Heart right ventricle (tissue), 16 donors: ENCODE measurements at regions of chr6 and their contacts with region 1.

Region 1: DNA sequence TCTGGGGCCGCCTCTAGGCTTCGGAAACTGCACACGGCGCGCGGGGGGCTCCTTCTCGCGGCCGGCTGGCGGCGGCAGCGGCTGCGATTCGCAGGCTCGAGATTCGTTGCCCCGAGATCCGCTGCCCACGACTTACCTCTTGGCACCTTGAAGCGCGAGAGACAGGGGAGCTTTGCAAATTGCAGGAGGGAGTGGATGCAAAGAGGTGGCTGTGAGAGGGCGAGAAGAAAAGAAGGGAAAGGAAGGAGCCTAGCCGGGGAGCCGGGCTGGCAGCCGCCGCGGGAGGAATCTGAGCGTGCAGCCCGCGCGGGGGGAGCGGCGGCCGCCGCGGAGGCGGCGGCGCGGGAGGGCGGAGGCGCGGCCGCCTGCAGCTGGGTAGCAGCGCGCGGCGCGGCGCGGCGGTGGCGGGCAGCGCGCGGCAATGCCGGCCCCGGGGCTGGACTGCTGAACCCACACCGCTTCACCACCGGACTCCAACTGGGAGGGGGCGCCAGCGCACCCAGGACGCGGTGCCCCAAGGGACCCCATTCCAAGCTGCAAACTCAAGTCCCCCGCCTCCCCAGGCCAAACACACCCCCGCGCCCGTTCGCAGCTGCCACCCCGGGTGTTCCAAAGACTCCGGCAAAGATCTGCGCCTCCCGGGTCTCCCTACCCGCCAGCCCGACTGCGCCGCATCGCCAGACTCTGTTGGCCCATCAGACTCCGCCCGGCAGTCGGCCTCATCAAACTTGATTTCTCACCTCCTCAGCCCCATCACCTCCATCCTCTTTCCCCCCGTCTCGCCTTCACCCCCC is 44.2 kb upstream of the SUPT3H start:
- DNase-seq: peak; percentile 46 to 57
- ATAC-seq: peak; percentile 40 to 80 (median 52)
- H3K4me3 ChIP-seq: peak overlapping the region; percentile 52 to 75 (median 63)
- H3K27ac ChIP-seq: peak overlapping the region in 6 of 10 donors; percentile 39 to 86 (median 60)
- H3K4me1 ChIP-seq: peaks cover 7 to 55% (median 34%) of the 10 kb centered on the region in 9 donors
- H3K27me3 ChIP-seq: peaks cover 0 to 81% (median 54%) of the 10 kb centered on the region in 7 donors
- CTCF ChIP-seq: peak in 3 of 9 donors; percentile 44 to 49 (median 47)

Region 2: DNA sequence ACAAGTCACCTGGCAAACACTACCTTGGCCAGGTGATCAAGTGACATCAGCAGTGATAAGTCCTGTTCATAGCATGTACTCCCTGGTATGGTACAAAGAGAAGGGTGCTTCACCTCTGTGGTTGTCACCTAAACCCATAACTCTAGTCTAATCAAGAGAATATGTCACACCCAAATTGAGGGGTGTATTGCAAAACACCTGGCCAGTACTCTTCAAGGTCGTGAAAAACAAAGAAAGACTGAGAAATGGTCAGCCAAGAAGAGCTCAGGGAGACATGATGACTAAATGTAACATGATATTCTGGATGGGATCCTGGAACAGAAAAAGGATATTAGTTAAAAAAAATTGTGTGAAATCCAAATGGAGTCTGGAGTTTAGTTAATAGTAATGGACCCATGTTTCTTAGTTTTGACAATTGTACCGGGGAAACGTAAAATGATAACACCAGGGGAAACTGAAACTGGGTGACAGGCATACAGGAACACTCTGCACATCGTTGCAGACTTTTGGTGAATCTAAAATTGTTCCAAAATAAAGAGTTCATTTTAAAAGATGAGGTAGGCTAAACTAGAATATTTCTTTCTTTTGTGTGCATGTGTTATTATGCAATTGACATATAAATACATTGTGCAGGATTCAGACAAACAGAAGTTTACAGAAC is 772.4 kb before region 1 on chr6:
- intact Hi-C with region 1: loop called in 4 of 10 experiments (anchors 5 to 10 kb)
- DNase-seq: no peak
- ATAC-seq: peak in 1 of 8 donors; percentile 29
- H3K4me3 ChIP-seq: no peak overlapping the region
- H3K27ac ChIP-seq: peak overlapping the region in 1 of 10 donors; percentile 40
- H3K4me1 ChIP-seq: no peaks in the 10 kb centered on the region
- H3K27me3 ChIP-seq: peaks cover 0 to 9% (median 0%) of the 10 kb centered on the region in 7 donors
- CTCF ChIP-seq: no peak

Region 3: GRCh38 chr6:44655412-44656342 is 766.2 kb before region 1 on chr6:
- intact Hi-C with region 1: loop called in 8 of 10 experiments (anchors 2 to 10 kb)
- DNase-seq: peak; percentile 60 to 74
- ATAC-seq: peak; percentile 54 to 87 (median 74)
- H3K4me3 ChIP-seq: no peak overlapping the region
- H3K27ac ChIP-seq: peak overlapping the region in 1 of 10 donors; percentile 43
- H3K4me1 ChIP-seq: peaks cover 0 to 8% (median 3%) of the 10 kb centered on the region in 9 donors
- H3K27me3 ChIP-seq: peaks cover 0 to 9% (median 0%) of the 10 kb centered on the region in 7 donors
- CTCF ChIP-seq: peak; percentile 76 to 98 (median 96)

Region 4: GRCh38 chr6:45138765-45139164 is 283.1 kb before region 1 on chr6:
- intact Hi-C with region 1: no loop called
- DNase-seq: no peak
- ATAC-seq: no peak
- H3K4me3 ChIP-seq: no peak overlapping the region
- H3K27ac ChIP-seq: no peak overlapping the region
- H3K4me1 ChIP-seq: no peaks in the 10 kb centered on the region
- H3K27me3 ChIP-seq: no peaks in the 10 kb centered on the region
- CTCF ChIP-seq: no peak

Region 5: GRCh38 chr6:45297320-45297719 is 124.6 kb before region 1 on chr6:
- intact Hi-C with region 1: no loop called
- DNase-seq: no peak
- ATAC-seq: no peak
- H3K4me3 ChIP-seq: no peak overlapping the region
- H3K27ac ChIP-seq: no peak overlapping the region
- H3K4me1 ChIP-seq: no peaks in the 10 kb centered on the region
- H3K27me3 ChIP-seq: no peaks in the 10 kb centered on the region
- CTCF ChIP-seq: no peak

Region 6: DNA sequence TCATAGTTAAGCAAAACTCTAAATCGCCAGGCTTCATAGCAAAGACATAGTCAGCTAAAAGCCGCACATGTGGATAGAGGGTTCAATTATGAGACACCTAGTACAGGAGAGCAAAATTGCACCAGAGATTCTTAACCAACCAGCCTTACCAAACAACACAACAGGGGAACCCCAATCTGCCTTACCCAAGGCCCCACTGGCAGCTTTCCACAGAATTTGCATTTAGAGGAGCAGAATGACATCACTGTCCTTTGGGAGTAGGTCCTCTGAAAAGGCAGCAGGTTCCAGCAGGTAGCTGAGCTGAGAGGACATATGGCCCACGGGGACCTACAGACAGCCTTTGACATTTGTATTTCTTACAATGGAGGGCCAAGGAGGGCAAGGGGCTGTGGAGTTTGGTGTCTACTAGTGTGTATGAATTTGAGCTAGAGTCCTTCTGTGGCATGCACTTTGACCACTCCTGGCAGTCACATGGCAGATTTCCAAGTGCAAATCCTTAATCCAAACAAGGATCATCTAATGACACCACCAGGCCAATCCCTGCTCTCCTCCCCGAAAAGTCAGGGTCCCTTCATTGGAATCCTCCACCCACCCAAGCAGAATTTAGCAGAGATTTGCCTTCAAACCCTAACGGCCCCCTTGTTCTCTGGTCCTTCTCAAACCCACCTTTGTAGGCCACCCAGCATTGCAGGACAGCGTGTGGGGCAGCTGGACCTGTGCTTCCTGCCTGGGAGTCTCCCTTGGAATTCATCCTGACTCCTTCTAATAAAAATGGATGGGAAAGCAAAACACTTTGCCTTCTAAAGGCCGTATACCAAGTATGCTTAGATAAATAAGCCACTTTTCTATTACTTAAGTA is 127.0 kb after region 1 on chr6:
- intact Hi-C with region 1: loop called in 1 of 10 experiments (anchors 10 kb)
- DNase-seq: no peak
- ATAC-seq: no peak
- H3K4me3 ChIP-seq: no peak overlapping the region
- H3K27ac ChIP-seq: no peak overlapping the region
- H3K4me1 ChIP-seq: peaks cover 0 to under 1% (median 0%) of the 10 kb centered on the region in 9 donors
- H3K27me3 ChIP-seq: no peaks in the 10 kb centered on the region
- CTCF ChIP-seq: no peak

Region 7: DNA sequence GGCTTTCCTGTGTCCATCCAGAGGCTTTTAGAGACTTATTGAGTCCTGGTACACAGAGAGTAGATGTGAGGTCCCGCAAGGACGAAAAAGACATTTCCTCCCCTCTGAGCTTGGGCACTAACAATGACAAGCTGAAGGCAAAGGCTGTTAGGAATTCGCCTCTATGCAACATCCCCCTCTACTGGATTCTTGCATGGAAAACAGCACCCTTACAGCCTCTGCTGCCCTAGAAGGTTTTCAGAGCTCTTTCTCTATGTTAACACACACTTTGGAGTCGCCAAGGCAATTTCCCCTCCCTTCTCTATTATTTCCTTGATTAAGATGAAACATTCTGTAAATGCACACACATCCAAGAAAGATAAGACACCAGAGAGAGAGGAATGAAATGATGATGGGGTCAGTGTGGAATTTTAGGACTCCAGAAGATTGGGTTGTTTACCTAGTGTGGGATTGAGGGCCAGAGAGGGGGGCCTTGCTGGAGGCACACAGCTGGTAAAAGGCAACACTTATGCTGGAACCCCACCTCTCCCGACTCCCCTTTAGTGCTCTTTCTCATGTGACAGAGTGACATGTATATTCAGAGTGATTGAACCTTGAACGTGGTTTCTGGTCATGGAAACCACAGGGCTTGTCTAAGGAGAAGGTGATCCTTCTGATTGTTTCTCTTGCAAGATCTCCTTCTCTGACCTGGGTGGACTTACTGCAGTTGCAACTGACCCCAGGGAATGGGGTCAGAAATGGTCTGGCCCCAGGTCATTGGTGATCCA is 293.0 kb after region 1 on chr6:
- intact Hi-C with region 1: loop called in 9 of 10 experiments (anchors 2 to 10 kb)
- DNase-seq: peak in 1 of 2 donors; percentile 67
- ATAC-seq: peak; percentile 86 to 97 (median 93)
- H3K4me3 ChIP-seq: no peak overlapping the region
- H3K27ac ChIP-seq: no peak overlapping the region
- H3K4me1 ChIP-seq: peaks cover 0 to 16% (median 0%) of the 10 kb centered on the region in 9 donors
- H3K27me3 ChIP-seq: peaks cover 0 to 6% (median 3%) of the 10 kb centered on the region in 7 donors
- CTCF ChIP-seq: peak; percentile 65 to 92 (median 82)

Region 8: DNA sequence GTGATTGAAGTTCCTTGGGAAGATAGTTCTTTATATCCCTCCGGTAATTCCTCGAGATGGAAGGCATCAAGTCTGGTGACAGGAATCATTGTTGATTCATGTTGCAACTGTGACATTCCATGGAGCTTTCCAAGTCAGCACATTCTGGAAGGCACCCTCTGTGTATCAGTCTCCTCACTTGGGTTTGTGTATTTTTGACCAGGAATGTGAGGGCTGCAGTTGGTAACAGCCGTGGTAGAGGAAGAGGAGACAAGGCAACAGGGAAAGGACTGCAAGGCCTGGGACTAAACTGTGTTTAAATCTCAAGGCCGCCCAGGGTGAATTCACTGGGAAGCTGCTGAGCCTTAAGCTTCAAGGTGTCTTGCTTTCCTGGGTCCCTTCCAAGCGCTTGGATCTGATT is 494.8 kb after region 1 on chr6:
- intact Hi-C with region 1: loop called in 2 of 10 experiments (anchors 10 kb)
- DNase-seq: no peak
- ATAC-seq: peak; percentile 28 to 81 (median 56)
- H3K4me3 ChIP-seq: no peak overlapping the region
- H3K27ac ChIP-seq: peak overlapping the region in 7 of 10 donors; percentile 8 to 82 (median 51)
- H3K4me1 ChIP-seq: peaks cover 5 to 32% (median 19%) of the 10 kb centered on the region in 9 donors
- H3K27me3 ChIP-seq: no peaks in the 10 kb centered on the region
- CTCF ChIP-seq: no peak